H1 (cell line): ENCODE measurements at regions of chr19 and their contacts with region 1.

Region 1: GRCh38 chr19:4375164-4376027 is 25.0 kb downstream of the SH3GL1 start:
- DNase-seq: peak; percentile 51 to 81
- H3K4me3 ChIP-seq: peak overlapping the region in 2 of 4 experiments; percentile 12 to 29; a peak in 3 of 8 replicates
- H3K27ac ChIP-seq: peak overlapping the region; percentile 82
- H3K4me1 ChIP-seq: peaks cover 5 to 43% (median 35%) of the 10 kb centered on the region in 4 experiments
- H3K27me3 ChIP-seq: no peaks in the 10 kb centered on the region
- CTCF ChIP-seq: peak; percentile 34 to 61 (median 59); a peak in 3 of 4 replicates
- EP300 ChIP-seq: no peak
- POLR2A ChIP-seq: no peak
- RAD21 ChIP-seq: no peak; a peak in 1 of 4 replicates

Region 2: GRCh38 chr19:4342615-4343369 is 32.6 kb before region 1 on chr19:
- CTCF ChIA-PET with region 1: interaction called, 4 read pairs
- POLR2A ChIA-PET with region 1: interaction called, 16 read pairs
- DNase-seq: peak; percentile 94 to 97
- H3K4me3 ChIP-seq: peak overlapping the region; percentile 66 to 92 (median 78)
- H3K27ac ChIP-seq: peak overlapping the region; percentile 96
- H3K4me1 ChIP-seq: peaks cover 0 to 16% (median 8%) of the 10 kb centered on the region in 4 experiments; a peak in 6 of 7 replicates
- H3K27me3 ChIP-seq: no peaks in the 10 kb centered on the region
- CTCF ChIP-seq: peak; percentile 23 to 50 (median 35); a peak in 3 of 4 replicates
- EP300 ChIP-seq: no peak
- POLR2A ChIP-seq: peak; percentile 93 to 99
- RAD21 ChIP-seq: peak; percentile 17 to 23; a peak in 2 of 4 replicates

Region 3: DNA sequence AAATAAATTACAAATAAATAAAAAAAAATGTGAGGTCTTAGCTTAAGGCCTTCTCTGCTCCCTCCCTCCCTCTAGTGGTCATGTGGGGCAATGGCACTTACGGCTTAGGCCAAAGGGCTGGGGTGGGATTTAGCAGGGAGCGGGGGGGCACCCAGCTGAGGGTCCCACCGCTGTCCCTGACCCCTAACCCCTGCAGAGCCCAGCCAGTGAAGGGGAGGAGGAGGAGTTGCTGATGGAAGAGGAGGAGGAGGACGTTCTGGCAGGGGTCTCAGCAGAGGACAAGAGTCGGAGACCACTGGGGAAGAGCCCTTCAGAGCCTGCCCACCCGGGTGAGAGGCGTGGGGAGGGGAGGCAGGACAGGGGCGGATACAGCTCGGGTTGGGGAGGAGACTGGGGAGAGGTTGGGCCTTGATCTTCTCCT is 22.7 kb before region 1 on chr19:
- CTCF ChIA-PET with region 1: interaction called, 12 read pairs
- POLR2A ChIA-PET with region 1: interaction called, 6 read pairs
- DNase-seq: peak in 1 of 2 experiments; percentile 83
- H3K4me3 ChIP-seq: no peak overlapping the region
- H3K27ac ChIP-seq: no peak overlapping the region
- H3K4me1 ChIP-seq: peaks cover 0 to 2% (median 0%) of the 10 kb centered on the region in 4 experiments; a peak in 1 of 7 replicates
- H3K27me3 ChIP-seq: no peaks in the 10 kb centered on the region
- CTCF ChIP-seq: peak; percentile 67 to 79 (median 75)
- EP300 ChIP-seq: no peak
- POLR2A ChIP-seq: no peak
- RAD21 ChIP-seq: peak; percentile 56 to 64; a peak in 3 of 4 replicates

Region 4: GRCh38 chr19:4362861-4363510 is 12.4 kb before region 1 on chr19:
- CTCF ChIA-PET with region 1: interaction called, 37 read pairs
- POLR2A ChIA-PET with region 1: interaction called, 63 read pairs
- DNase-seq: peak in 1 of 2 experiments; percentile 76
- H3K4me3 ChIP-seq: no peak overlapping the region
- H3K27ac ChIP-seq: no peak overlapping the region
- H3K4me1 ChIP-seq: peaks cover 0 to 13% (median 2%) of the 10 kb centered on the region in 4 experiments; a peak in 3 of 7 replicates
- H3K27me3 ChIP-seq: no peaks in the 10 kb centered on the region
- CTCF ChIP-seq: peak; percentile 60 to 77 (median 67)
- EP300 ChIP-seq: no peak
- POLR2A ChIP-seq: 0 out of 3 replicates have a peak, but pooled peaks of 1 of the 2 experiments have one; percentile 45
- RAD21 ChIP-seq: peak; percentile 51 to 58

Region 5: DNA sequence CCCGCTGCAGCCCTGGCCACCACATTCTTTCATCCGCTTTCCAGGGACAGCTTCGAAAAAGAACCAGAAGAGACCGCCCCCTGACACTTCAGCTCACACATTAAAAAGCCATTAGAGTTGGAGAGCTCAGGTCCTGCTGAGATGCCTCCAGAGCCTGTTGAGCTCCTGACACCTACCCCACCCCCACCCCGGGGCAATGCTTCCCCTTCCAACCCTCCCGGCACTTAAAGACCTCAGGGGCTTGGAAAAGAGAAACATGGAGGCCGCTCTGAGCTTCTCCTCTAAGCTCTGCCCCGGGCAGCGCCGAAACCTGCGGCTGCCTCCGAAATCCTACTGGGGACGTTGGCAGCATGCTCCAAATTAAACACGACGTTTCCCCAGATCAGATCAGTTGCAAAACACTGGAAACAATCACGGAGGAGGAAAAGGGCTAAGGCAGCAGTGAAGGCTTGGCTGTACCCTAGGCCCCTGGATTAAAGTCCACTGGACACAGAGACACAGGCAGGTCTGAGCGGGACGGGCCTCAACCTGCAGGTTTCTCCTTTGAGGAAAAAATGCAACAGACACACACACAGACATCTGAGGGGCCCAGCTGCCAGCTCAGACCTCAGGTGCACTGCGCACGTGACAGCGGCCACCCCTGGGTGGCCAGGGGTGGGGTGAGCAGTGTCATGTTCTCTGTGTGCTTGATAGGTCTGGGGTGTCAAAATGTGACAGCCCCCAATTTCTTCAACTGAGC is 15.3 kb after region 1 on chr19:
- CTCF ChIA-PET with region 1: interaction called, 72 read pairs
- POLR2A ChIA-PET with region 1: interaction called, 38 read pairs
- DNase-seq: peak in 1 of 2 experiments; percentile 51
- H3K4me3 ChIP-seq: peak overlapping the region in 3 of 4 experiments; percentile 15 to 48 (median 19); a peak in 5 of 8 replicates
- H3K27ac ChIP-seq: no peak overlapping the region
- H3K4me1 ChIP-seq: peaks cover 10 to 39% (median 26%) of the 10 kb centered on the region in 4 experiments
- H3K27me3 ChIP-seq: no peaks in the 10 kb centered on the region
- CTCF ChIP-seq: no peak
- EP300 ChIP-seq: no peak
- POLR2A ChIP-seq: no peak
- RAD21 ChIP-seq: peak in 1 of 2 experiments; percentile 8; a peak in 1 of 4 replicates

Region 6: GRCh38 chr19:4400135-4400936 is 24.9 kb after region 1 on chr19 and contains the start of gene SH3GL1:
- CTCF ChIA-PET with region 1: interaction called, 38 read pairs
- POLR2A ChIA-PET with region 1: interaction called, 18 read pairs
- DNase-seq: peak; percentile 83 to 95
- H3K4me3 ChIP-seq: peak within 1 kb of the TSS; percentile 58 to 93 (median 82)
- H3K27ac ChIP-seq: peak within 1 kb of the TSS; percentile 40; the same call in 1 of the 2 replicates
- H3K4me1 ChIP-seq: peaks cover 0 to 9% (median 4%) of the 10 kb centered on the region in 4 experiments; a peak in 4 of 7 replicates
- H3K27me3 ChIP-seq: no peaks in the 10 kb centered on the region
- CTCF ChIP-seq: peak; percentile 92 to 99 (median 96)
- EP300 ChIP-seq: peak in 1 of 2 experiments; percentile 57; a peak in 1 of 3 replicates
- POLR2A ChIP-seq: no peak; a peak in 1 of 3 replicates
- RAD21 ChIP-seq: peak; percentile 32 to 62; a peak in 3 of 4 replicates
- total RNA-seq, gene SH3GL1: 102 TPM in 2 replicates

Region 7: GRCh38 chr19:4409123-4409933 is 33.9 kb after region 1 on chr19:
- CTCF ChIA-PET with region 1: interaction called, 5 read pairs
- POLR2A ChIA-PET with region 1: interaction called, 18 read pairs
- DNase-seq: peak; percentile 73 to 87
- H3K4me3 ChIP-seq: peak overlapping the region in 3 of 4 experiments; percentile 11 to 44 (median 19); a peak in 5 of 8 replicates
- H3K27ac ChIP-seq: peak overlapping the region; percentile 80
- H3K4me1 ChIP-seq: peaks cover 6 to 25% (median 14%) of the 10 kb centered on the region in 4 experiments
- H3K27me3 ChIP-seq: no peaks in the 10 kb centered on the region
- CTCF ChIP-seq: no peak
- EP300 ChIP-seq: peak in 1 of 2 experiments; percentile 92; a peak in 1 of 3 replicates
- POLR2A ChIP-seq: peak; percentile 71 to 78
- RAD21 ChIP-seq: no peak